Activated naive CD4-positive, alpha-beta T cell treated with anti-CD3 and anti-CD28 coated beads for 36 hours (primary cell): ENCODE measurements at regions of chr14 and their contacts with region 1.

Region 1: DNA sequence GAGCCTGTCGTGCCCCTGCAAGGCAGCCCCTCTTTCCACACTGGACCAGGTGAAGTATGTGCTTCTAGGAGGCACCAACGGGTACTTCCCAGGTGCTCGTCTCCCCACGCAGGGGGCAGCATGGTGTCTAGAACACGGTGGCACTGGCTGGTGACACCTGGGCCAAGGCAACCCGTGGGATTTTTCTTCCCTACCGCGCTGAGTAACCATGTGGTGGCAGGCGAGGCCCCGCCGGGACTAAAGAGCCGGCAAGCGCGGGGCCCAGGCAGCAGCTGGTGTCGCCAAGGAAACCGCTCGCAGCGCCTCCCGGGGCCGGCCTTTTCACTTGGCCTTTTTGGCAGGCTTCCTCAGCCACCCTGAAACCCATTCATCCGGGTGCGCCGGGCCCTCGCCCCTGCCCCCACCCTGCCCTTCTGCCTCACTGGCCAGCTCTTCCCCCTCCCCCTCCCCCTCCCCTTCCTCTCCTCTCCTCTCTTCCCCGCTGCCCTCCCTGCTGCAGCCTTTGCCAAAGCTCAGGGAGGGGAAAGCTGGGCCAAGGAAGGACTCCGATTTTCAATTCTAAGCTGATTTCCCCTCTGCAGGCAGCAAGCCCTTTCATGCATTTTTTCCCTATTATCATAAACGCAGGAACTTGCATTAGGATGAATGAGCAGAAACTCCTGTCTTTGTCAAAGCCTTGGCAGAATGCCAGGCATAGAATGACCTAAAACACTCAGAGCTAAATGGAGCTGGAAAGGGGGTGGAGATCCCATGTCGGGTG is 81.2 kb downstream of the IRF2BPL start:
- DNase-seq: peak; percentile 93
- H3K4me3 Mint-ChIP-seq: no peak overlapping the region
- H3K27ac Mint-ChIP-seq: peak overlapping the region; percentile 39
- H3K4me1 Mint-ChIP-seq: peaks cover 33% of the 10 kb centered on the region
- H3K27me3 Mint-ChIP-seq: no peaks in the 10 kb centered on the region

Region 2: GRCh38 chr14:76876076-76876475 is 71.2 kb before region 1 on chr14:
- CTCF ChIA-PET with region 1: interaction called, 9 read pairs
- intact Hi-C with region 1: loop called (anchors 2 kb)
- DNase-seq: peak; percentile 55
- H3K4me3 Mint-ChIP-seq: no peak overlapping the region
- H3K27ac Mint-ChIP-seq: no peak overlapping the region
- H3K4me1 Mint-ChIP-seq: no peaks in the 10 kb centered on the region
- H3K27me3 Mint-ChIP-seq: no peaks in the 10 kb centered on the region

Region 3: DNA sequence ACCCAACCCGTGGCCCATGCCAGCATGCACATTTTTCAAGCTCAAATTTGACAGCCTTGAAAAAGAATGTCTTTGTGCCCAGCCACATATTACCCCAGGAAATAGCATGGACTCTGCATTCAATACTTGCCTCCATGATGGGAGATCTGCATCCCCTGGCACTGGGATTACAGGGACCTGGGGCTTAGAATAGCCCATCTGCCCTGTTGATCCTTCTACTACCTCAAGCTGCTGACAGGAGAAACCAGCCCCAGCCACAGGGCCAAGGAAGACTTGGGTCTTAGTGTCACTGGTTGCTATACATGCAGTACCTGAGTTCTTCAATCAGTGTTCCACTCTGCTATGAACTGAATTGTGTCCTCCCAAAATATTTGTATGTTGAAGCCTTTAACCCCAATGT is 35.8 kb before region 1 on chr14:
- CTCF ChIA-PET with region 1: interaction called, 20 read pairs
- intact Hi-C with region 1: loop called (anchors 1 kb)
- DNase-seq: no peak
- H3K4me3 Mint-ChIP-seq: no peak overlapping the region
- H3K27ac Mint-ChIP-seq: no peak overlapping the region
- H3K4me1 Mint-ChIP-seq: peaks cover 15% of the 10 kb centered on the region
- H3K27me3 Mint-ChIP-seq: no peaks in the 10 kb centered on the region

Region 4: DNA sequence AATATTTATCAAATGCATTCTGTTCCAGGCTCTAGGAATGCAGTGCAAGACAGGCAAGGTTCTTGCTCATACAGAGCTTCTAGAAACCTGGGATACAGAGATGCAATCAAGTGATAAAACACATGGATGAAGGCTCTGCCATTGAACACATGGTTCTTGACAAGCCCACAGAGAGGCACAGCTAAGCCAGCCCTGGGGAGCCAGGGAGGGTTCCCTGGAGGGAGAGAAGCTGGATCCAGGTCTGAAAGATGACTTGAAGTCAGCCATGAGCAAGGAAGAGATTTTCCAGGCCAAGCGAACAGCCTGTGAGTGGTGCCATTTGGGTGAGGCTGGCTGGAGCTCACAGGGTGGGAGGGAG is 15.0 kb after region 1 on chr14:
- CTCF ChIA-PET with region 1: interaction called, 19 read pairs
- intact Hi-C with region 1: loop called (anchors 1 kb)
- DNase-seq: no peak
- H3K4me3 Mint-ChIP-seq: peak overlapping the region; percentile 68
- H3K27ac Mint-ChIP-seq: peak overlapping the region; percentile 98
- H3K4me1 Mint-ChIP-seq: peaks cover 90% of the 10 kb centered on the region
- H3K27me3 Mint-ChIP-seq: no peaks in the 10 kb centered on the region

Region 5: GRCh38 chr14:77011171-77011762 is 64.0 kb after region 1 on chr14:
- CTCF ChIA-PET with region 1: interaction called, 4 read pairs
- intact Hi-C with region 1: loop called (anchors 1 kb)
- DNase-seq: no peak
- H3K4me3 Mint-ChIP-seq: no peak overlapping the region
- H3K27ac Mint-ChIP-seq: no peak overlapping the region
- H3K4me1 Mint-ChIP-seq: peaks cover 13% of the 10 kb centered on the region
- H3K27me3 Mint-ChIP-seq: no peaks in the 10 kb centered on the region

Region 6: GRCh38 chr14:77023001-77023996 is 76.0 kb after region 1 on chr14:
- CTCF ChIA-PET with region 1: interaction called, 3 read pairs
- intact Hi-C with region 1: loop called (anchors 1 kb)
- DNase-seq: peak; percentile 73
- H3K4me3 Mint-ChIP-seq: peak overlapping the region; percentile 26
- H3K27ac Mint-ChIP-seq: peak overlapping the region; percentile 86
- H3K4me1 Mint-ChIP-seq: peaks cover 49% of the 10 kb centered on the region
- H3K27me3 Mint-ChIP-seq: no peaks in the 10 kb centered on the region

Region 7: DNA sequence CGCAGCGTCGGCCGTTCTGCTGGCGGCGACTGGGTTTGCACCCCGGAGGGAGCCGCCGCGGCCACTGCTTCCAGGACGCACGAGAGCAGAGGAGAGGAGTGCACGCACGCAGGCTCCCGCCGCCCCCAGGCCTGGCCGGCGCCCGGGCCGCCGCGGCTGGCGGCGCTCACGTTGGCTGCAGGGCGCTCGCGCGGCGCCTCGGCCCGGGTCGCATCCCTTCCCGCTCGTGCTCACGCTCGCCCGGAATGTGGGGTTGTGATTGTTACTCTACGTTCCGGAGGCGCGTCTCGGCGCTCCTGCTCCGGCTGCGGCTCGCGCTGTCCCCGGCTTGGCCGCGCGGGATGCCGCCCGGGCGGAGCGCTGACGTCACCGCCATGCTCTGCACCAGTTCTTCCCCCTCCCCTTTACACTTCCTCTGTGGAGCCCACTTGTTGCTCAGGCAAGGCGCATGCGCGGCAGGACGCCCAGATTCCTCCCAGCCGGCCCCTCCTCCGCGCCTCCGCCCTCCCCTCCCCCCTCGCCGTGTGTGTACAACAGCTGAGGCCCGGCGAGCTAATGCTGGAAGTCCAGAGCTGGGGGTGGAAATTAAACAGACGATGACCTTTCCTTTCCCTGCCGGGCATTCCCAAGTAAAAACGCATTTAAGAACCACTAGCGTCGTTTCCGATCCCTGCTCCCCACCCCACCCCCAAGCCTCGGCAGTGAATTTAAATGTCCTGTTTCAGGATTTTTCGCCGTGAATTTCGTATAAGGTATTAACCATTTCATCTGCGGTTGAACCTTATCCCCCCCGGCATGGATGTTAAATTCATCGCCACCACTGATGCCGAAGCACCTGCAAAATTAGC is 81.3 kb after region 1 on chr14 and contains the start of gene IRF2BPL:
- CTCF ChIA-PET with region 1: interaction called, 5 read pairs
- intact Hi-C with region 1: loop called (anchors 1 kb)
- DNase-seq: peak; percentile 96
- H3K4me3 Mint-ChIP-seq: peak within 1 kb of the TSS; percentile 82
- H3K27ac Mint-ChIP-seq: peak within 1 kb of the TSS; percentile 94
- H3K4me1 Mint-ChIP-seq: peaks cover 57% of the 10 kb centered on the region
- H3K27me3 Mint-ChIP-seq: no peaks in the 10 kb centered on the region
- total RNA-seq, gene IRF2BPL: 34.8 to 35.2 TPM